ENCODE measurements at regions of chr20 and their contacts with region 1.

Region 1: GRCh38 chr20:9616833-9617489 is 102.6 kb downstream of the LAMP5 start:
- DNase-seq: peak; percentile 50

Region 2: GRCh38 chr20:9407805-9408421 is 209.0 kb before region 1 on chr20:
- CTCF ChIA-PET with region 1: interaction called, 42 read pairs
- POLR2A ChIA-PET with region 1: no interaction called
- DNase-seq: peak; percentile 59

Region 3: GRCh38 chr20:9912858-9913434 is 296.0 kb after region 1 on chr20:
- CTCF ChIA-PET with region 1: interaction called, 30 read pairs
- POLR2A ChIA-PET with region 1: no interaction called
- DNase-seq: peak; percentile 48

Region 4: DNA sequence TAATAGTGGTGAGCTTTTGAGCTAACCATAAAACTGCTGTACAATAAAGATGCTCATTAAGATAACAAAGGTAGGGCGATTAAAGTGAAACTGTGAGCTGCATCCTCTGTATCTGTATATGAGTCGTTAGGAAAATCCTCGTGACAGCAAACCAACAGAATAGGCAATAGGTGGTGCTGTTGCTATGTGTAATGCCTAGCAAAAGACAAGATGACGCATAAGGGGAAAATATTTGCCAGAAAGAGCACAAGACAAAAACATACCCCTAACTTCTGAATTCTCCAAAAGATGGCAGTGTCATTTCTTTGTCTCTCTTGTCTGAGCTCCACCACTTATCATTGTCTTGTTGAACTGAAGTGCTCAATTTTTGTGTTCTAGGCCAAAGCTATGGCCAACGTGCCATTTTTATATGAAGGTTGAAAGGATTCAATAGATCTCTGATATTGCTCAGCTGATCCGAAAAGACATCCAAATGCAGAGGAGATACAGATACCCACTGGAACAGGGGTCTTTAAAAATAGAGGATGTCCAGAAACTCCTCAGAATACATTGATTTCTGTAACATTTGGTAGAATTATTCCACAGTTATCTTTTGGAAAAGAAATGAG is 361.5 kb after region 1 on chr20:
- CTCF ChIA-PET with region 1: interaction called, 18 read pairs
- POLR2A ChIA-PET with region 1: no interaction called
- DNase-seq: peak; percentile 52